MCF 10A (cell line): ENCODE measurements at regions of chr1 and their contacts with region 1.

Region 1: DNA sequence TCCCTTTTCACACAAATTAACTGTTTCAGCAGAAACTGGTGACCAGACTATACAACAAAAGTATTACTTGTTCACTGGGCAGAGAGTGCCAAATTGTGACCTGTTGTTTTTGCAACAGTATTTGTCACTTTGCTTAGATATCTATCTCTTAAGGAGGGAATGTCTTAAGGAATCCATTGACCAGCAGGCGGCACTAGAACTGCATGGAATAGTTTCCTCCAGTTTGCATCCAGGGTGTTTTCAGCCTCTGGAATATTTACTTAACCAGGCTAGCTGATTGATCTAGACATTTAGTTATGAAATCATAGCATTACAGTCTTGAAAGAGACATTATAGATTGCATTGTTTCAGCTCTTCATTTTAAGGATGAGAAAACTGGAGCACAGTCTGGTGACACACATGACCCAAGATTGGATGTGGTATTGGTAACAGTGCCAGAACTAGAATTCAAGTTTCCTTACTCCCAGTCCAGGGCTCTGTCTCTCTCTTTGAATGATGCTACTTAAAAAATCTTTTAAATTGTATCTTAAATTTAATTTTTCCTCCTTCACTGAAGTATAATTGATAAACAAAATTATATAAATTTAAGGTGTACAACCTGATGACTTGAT is 16.9 kb downstream of the RPTN start:
- DNase-seq: peak; percentile 94
- H3K4me3 Mint-ChIP-seq: no peak overlapping the region
- H3K27ac Mint-ChIP-seq: no peak overlapping the region
- H3K4me1 Mint-ChIP-seq: peaks cover 8% of the 10 kb centered on the region
- H3K27me3 Mint-ChIP-seq: peaks cover 8% of the 10 kb centered on the region
- CTCF ChIP-seq: peak; percentile 93

Region 2: GRCh38 chr1:151847842-151848596 is 294.1 kb before region 1 on chr1:
- CTCF ChIA-PET with region 1: no interaction called
- POLR2A ChIA-PET with region 1: no interaction called
- intact Hi-C with region 1: no loop called
- DNase-seq: no peak
- H3K4me3 Mint-ChIP-seq: no peak overlapping the region
- H3K27ac Mint-ChIP-seq: no peak overlapping the region
- H3K4me1 Mint-ChIP-seq: peaks cover 16% of the 10 kb centered on the region
- H3K27me3 Mint-ChIP-seq: peaks cover 16% of the 10 kb centered on the region
- CTCF ChIP-seq: no peak

Region 3: GRCh38 chr1:151858030-151858691 is 283.9 kb before region 1 on chr1:
- CTCF ChIA-PET with region 1: no interaction called
- POLR2A ChIA-PET with region 1: no interaction called
- intact Hi-C with region 1: no loop called
- DNase-seq: peak; percentile 66
- H3K4me3 Mint-ChIP-seq: no peak overlapping the region
- H3K27ac Mint-ChIP-seq: peak overlapping the region; percentile 84
- H3K4me1 Mint-ChIP-seq: peaks cover 40% of the 10 kb centered on the region
- H3K27me3 Mint-ChIP-seq: no peaks in the 10 kb centered on the region
- CTCF ChIP-seq: no peak

Region 4: DNA sequence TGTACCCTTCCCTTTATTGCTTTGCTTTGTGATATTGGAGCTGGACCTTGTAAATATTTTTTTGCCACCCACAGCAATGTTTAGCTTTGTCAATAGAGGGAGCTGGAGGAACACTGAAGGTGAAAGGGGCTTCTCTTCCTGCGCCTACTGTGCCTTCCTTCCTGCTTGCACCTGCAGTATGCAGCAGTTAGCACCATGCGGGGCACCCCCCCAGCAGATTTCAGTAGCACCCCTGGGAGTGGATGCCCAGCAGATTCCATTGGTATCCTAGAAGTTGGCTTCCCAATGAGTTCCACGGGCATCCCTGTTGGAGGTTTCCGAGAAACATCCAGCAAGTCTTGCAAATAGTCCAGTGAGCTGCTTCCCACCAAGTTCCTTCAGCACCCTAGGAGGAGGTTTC is 174.0 kb before region 1 on chr1:
- CTCF ChIA-PET with region 1: interaction called, 3 read pairs
- POLR2A ChIA-PET with region 1: interaction called, 3 read pairs
- intact Hi-C with region 1: loop called (anchors 1 kb)
- DNase-seq: peak; percentile 86
- H3K4me3 Mint-ChIP-seq: no peak overlapping the region
- H3K27ac Mint-ChIP-seq: no peak overlapping the region
- H3K4me1 Mint-ChIP-seq: peaks cover 34% of the 10 kb centered on the region
- H3K27me3 Mint-ChIP-seq: no peaks in the 10 kb centered on the region
- CTCF ChIP-seq: peak; percentile 91

Region 5: DNA sequence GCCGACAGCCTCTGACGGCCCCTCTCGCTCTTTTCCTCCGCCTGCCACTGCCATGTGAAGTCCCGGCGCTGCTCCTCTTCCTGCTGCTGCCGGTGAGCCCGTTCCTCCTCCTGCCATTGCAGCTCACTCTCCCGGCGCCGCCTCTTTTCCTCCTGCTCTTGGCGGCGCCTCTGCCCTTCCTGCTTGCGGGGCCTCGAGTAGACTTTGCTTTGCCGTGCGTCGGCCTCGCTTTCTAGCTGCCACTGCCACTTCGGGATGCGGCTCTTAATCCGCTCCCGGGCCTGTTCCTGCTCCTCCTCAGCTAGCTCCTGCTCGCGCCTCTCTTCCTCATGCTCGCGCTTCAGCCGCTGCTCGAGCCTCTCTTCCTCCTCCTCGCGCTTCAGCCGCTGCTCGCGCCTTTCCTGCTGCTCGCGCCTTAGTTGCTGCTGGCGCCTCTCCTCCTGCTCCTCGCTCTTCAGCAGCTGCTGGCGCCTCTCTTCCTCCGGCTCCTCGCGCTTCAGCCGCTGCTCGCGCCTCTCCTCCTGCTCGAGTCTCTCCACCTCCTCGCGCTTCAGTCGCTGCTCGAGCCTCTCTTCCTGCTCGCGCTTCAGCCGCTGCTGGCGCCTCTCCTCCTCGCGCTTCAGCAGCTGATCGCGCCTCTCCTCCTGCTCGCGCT is 31.1 kb before region 1 on chr1:
- CTCF ChIA-PET with region 1: interaction called, 18 read pairs
- POLR2A ChIA-PET with region 1: interaction called, 4 read pairs
- intact Hi-C with region 1: loop called (anchors 2 kb)
- DNase-seq: peak; percentile 71
- H3K4me3 Mint-ChIP-seq: no peak overlapping the region
- H3K27ac Mint-ChIP-seq: no peak overlapping the region
- H3K4me1 Mint-ChIP-seq: no peaks in the 10 kb centered on the region
- H3K27me3 Mint-ChIP-seq: no peaks in the 10 kb centered on the region
- CTCF ChIP-seq: no peak

Region 6: GRCh38 chr1:152162806-152163463 is 20.9 kb after region 1 on chr1:
- CTCF ChIA-PET with region 1: interaction called, 26 read pairs
- POLR2A ChIA-PET with region 1: interaction called, 171 read pairs
- intact Hi-C with region 1: no loop called
- DNase-seq: peak; percentile 84
- H3K4me3 Mint-ChIP-seq: no peak overlapping the region
- H3K27ac Mint-ChIP-seq: peak overlapping the region; percentile 99
- H3K4me1 Mint-ChIP-seq: peaks cover 57% of the 10 kb centered on the region
- H3K27me3 Mint-ChIP-seq: no peaks in the 10 kb centered on the region
- CTCF ChIP-seq: no peak

Region 7: GRCh38 chr1:152182431-152182830 is 40.4 kb after region 1 on chr1:
- CTCF ChIA-PET with region 1: interaction called, 276 read pairs
- POLR2A ChIA-PET with region 1: interaction called, 132 read pairs
- intact Hi-C with region 1: loop called (anchors 1 kb)
- DNase-seq: peak; percentile 80
- H3K4me3 Mint-ChIP-seq: no peak overlapping the region
- H3K27ac Mint-ChIP-seq: peak overlapping the region; percentile 82
- H3K4me1 Mint-ChIP-seq: peaks cover 64% of the 10 kb centered on the region
- H3K27me3 Mint-ChIP-seq: no peaks in the 10 kb centered on the region
- CTCF ChIP-seq: peak; percentile 94

Region 8: GRCh38 chr1:152227310-152227928 is 85.3 kb after region 1 on chr1:
- CTCF ChIA-PET with region 1: interaction called, 7 read pairs
- POLR2A ChIA-PET with region 1: no interaction called
- intact Hi-C with region 1: loop called (anchors 1 kb)
- DNase-seq: peak; percentile 66
- H3K4me3 Mint-ChIP-seq: no peak overlapping the region
- H3K27ac Mint-ChIP-seq: no peak overlapping the region
- H3K4me1 Mint-ChIP-seq: peaks cover 17% of the 10 kb centered on the region
- H3K27me3 Mint-ChIP-seq: no peaks in the 10 kb centered on the region
- CTCF ChIP-seq: peak; percentile 79

Region 9: DNA sequence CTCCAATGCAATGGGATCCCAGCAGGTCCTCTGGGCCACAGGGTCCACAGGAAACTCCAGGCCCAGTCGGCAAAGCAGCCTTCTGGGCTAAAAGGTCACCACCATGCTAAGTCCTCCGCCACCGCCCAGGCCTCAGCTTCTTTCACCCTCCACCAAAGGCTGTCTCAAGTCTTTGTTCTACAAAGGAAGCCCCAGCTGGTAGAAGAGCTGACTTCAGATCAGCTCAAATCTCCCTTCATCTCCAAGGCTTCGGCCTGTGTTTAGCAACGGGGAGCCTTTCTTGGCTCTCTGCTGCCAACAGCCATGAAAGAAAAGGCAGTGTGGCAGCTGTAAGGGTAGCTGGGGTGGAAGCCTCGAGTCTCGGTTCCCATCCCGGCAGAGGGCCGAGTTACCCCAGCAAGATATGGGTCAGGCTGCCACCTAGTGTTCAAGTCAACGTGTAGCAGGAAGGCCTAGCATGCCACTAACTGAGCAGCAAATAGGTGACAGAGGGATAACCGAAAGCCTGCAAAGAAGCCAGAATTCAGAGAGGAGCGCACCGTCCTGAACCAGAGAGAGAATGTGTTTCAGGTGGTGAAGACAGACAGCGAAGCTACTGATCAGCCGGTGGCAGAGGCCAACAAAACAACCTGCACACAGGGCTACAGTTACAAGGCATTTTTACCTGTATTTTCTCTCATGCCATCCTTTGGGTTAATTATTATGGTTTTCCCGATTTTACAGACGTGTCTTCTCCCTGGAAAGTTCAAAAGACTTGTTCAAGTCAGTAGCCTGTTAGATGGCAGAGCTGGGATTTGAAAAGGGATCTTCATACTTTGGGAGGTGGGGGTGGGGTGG is 298.8 kb after region 1 on chr1:
- CTCF ChIA-PET with region 1: interaction called, 7 read pairs
- POLR2A ChIA-PET with region 1: no interaction called
- intact Hi-C with region 1: loop called (anchors 5 kb)
- DNase-seq: peak; percentile 89
- H3K4me3 Mint-ChIP-seq: no peak overlapping the region
- H3K27ac Mint-ChIP-seq: no peak overlapping the region
- H3K4me1 Mint-ChIP-seq: peaks cover 24% of the 10 kb centered on the region
- H3K27me3 Mint-ChIP-seq: no peaks in the 10 kb centered on the region
- CTCF ChIP-seq: peak; percentile 91